Caco-2 (cell line): ENCODE measurements at regions of chr9 and their contacts with region 1.

Region 1: DNA sequence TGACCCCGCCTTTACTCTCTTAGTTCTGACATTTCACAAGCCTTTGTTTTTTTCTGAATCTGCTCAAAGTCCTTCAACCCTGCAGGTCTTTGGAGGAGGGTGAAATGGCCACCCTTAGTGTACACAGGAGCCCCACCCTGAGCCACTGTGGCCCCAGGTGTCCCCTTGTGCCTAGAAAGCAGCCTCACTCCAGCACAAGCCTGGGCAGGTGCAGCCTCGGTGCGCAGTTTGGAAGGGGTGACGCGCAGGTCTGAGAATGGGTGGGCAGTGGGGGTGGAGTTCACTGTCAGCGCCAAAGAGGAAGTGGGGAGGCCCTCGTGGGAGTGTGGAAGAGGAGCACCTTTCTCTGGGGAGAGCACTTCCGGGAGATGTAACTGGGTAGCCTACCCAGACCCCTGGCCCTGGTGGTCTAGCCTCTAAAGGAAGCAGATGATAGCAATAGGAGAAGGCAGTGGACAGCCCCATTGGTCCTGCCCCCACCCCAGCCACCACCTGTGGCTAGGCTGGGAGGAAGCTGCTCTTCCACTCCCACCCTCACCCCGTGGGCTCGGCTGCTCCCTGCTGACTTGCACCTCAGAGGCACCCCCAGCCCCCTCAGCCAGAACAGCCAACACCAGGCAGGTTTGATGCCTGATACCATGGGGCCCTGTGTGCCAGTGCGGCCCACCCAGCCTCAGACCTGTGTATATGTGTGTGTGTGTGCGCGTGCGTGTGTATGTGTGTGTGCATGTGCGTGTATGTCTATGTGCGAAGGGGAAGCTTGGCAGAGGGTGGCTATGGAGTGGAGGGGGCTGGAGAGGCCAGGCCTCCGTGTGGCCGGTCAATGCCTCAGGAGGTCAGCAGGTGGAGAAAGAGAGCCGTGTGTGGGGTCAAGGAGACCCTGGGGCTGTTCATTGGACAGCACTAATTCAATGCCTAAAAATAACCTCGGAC is 16.8 kb upstream of the DAB2IP start:
- DNase-seq: peak; percentile 72 to 74
- H3K4me3 ChIP-seq: no peak overlapping the region
- H3K4me3 Mint-ChIP-seq: no peak overlapping the region
- H3K27ac Mint-ChIP-seq: no peak overlapping the region
- H3K4me1 ChIP-seq: peaks cover 12% of the 10 kb centered on the region
- H3K4me1 Mint-ChIP-seq: peaks cover 5% of the 10 kb centered on the region
- H3K27me3 ChIP-seq: no peaks in the 10 kb centered on the region
- H3K27me3 Mint-ChIP-seq: no peaks in the 10 kb centered on the region
- CTCF ChIP-seq: peak; percentile 79 to 87

Region 2: DNA sequence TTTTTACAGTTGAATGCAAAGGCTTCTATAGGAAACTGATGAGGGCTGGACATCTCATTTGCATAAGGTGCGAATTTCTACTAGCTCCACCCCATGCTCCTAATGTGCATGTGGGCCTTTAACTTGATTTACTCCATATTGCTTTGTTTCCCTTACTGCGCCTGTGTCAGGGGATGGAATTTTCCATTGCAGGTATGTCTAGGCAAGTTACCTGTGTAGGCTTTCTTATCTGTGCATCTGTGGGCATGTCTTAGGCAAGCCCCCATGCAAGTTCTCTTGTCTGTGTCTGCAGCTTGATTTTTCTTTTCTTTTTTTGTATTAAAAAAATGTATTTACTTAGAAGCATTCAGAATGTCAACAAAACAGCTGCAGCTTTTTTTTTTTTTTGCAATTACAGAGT is 115.5 kb before region 1 on chr9:
- CTCF ChIA-PET with region 1: no interaction called
- POLR2A ChIA-PET with region 1: no interaction called
- intact Hi-C with region 1: no loop called
- DNase-seq: no peak
- H3K4me3 ChIP-seq: no peak overlapping the region
- H3K4me3 Mint-ChIP-seq: no peak overlapping the region
- H3K27ac Mint-ChIP-seq: no peak overlapping the region
- H3K4me1 ChIP-seq: no peaks in the 10 kb centered on the region
- H3K4me1 Mint-ChIP-seq: no peaks in the 10 kb centered on the region
- H3K27me3 ChIP-seq: no peaks in the 10 kb centered on the region
- H3K27me3 Mint-ChIP-seq: peaks cover 10% of the 10 kb centered on the region
- CTCF ChIP-seq: no peak

Region 3: DNA sequence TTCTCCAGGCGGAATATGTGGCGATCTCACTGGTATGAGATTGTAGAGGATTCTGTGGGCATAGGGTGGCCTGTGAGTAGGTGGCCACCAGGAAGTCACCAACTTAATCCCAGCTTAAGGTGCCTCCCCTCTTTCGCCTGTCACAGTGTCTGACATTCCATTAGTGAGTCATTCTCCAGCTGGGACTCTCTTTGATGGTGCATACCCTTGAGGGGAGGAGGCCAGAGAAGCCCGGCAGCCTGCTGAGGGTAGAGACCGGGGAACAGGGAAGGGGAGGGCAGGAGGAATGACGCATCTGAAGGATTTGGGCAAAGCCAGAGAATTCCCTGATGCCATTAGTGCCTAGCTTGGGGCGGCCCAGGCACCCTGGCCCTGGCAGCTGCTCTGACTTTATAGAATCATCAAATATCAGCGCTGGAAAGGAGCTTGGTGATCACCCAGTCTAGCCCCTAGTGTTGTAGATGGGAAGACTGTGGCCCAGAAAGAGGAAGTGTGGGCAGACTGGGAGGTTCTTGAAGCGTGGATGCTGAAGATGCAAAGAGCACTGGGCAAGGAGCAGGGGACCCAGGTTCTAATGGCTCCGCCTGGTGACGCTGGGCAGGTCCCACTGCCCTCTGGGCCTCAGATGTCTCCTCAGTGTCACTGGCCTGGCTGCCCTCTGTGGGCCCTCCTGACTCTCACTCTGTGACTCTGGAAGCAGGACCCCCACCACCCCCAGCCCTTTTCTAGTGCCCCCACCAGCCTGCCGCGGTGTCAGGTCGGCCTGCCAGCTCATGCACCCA is 58.2 kb after region 1 on chr9:
- CTCF ChIA-PET with region 1: interaction called, 17 read pairs
- POLR2A ChIA-PET with region 1: no interaction called
- intact Hi-C with region 1: loop called (anchors 2 kb)
- DNase-seq: peak; percentile 72 to 76
- H3K4me3 ChIP-seq: no peak overlapping the region
- H3K4me3 Mint-ChIP-seq: no peak overlapping the region
- H3K27ac Mint-ChIP-seq: peak overlapping the region; percentile 82
- H3K4me1 ChIP-seq: peaks cover 18% of the 10 kb centered on the region
- H3K4me1 Mint-ChIP-seq: peaks cover 22% of the 10 kb centered on the region
- H3K27me3 ChIP-seq: no peaks in the 10 kb centered on the region
- H3K27me3 Mint-ChIP-seq: no peaks in the 10 kb centered on the region
- CTCF ChIP-seq: no peak

Region 4: DNA sequence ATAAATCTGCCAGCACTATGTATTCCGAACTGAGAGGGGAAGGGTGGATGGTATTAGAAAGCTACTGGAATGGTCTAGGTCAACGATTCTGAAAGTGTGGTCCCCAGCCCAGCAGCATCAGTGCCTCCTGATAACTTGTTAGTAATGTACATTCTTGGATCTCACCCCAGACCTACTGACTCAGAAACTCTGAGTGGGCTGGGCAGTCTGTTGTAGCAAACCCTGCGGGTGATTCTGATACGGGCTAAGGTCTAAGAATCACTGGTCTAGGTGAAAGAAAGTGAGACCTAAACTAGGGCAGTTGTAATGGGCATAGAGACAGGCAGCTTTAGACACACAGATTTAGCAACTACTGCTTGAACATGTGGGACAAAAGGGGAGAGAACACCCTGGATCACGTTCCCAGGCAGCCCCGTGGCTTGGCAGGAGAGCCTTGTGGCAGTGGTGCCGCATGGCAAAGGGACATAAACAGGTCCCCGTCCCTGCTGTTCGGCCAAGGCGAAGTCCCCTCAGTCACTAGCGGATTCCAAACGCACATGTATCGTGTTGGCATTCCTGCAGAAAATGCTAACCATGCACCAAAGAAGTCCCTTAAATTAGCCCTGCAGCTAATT is 242.2 kb after region 1 on chr9:
- CTCF ChIA-PET with region 1: no interaction called
- POLR2A ChIA-PET with region 1: no interaction called
- intact Hi-C with region 1: no loop called
- DNase-seq: no peak
- H3K4me3 ChIP-seq: no peak overlapping the region
- H3K4me3 Mint-ChIP-seq: no peak overlapping the region
- H3K27ac Mint-ChIP-seq: no peak overlapping the region
- H3K4me1 ChIP-seq: no peaks in the 10 kb centered on the region
- H3K4me1 Mint-ChIP-seq: no peaks in the 10 kb centered on the region
- H3K27me3 ChIP-seq: no peaks in the 10 kb centered on the region
- H3K27me3 Mint-ChIP-seq: peaks cover 13% of the 10 kb centered on the region
- CTCF ChIP-seq: no peak